Activated CD4-positive, alpha-beta T cell treated with anti-CD3 and anti-CD28 coated beads for 36 hours (primary cell): ENCODE measurements at regions of chr18 and their contacts with region 1.

Region 1: GRCh38 chr18:4181882-4182568 is 273.1 kb downstream of the DLGAP1 start:
- DNase-seq: no peak
- ATAC-seq: no peak
- H3K4me3 Mint-ChIP-seq: no peak overlapping the region
- H3K27ac Mint-ChIP-seq: no peak overlapping the region
- H3K4me1 Mint-ChIP-seq: no peaks in the 10 kb centered on the region
- H3K27me3 Mint-ChIP-seq: no peaks in the 10 kb centered on the region

Region 2: GRCh38 chr18:4119813-4120212 is 62.2 kb before region 1 on chr18:
- CTCF ChIA-PET with region 1: no interaction called
- POLR2A ChIA-PET with region 1: no interaction called
- intact Hi-C with region 1: loop called in 1 of 2 experiments (anchors 5 kb)
- DNase-seq: no peak
- ATAC-seq: no peak
- H3K4me3 Mint-ChIP-seq: no peak overlapping the region
- H3K27ac Mint-ChIP-seq: no peak overlapping the region
- H3K4me1 Mint-ChIP-seq: no peaks in the 10 kb centered on the region
- H3K27me3 Mint-ChIP-seq: peaks cover 10% of the 10 kb centered on the region

Region 3: DNA sequence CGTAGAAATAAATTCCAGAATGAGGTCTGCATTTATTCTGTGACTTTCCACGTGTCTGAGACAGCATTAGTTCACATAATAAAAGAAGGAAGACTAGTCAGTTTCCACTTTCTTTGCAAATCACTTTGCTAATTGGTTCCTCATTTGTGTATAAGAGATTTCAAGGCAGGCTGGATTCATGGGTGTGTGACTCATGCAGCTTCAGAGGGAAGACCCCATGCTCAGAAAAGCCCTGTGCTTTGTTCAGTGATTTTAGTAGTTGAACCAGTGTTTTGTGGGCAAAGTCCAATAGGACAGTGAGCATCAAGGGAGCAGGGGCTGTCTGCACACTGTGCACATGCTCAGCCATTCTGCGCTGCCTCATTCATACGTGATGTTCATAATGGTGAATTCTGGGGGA is 24.7 kb before region 1 on chr18:
- CTCF ChIA-PET with region 1: no interaction called
- POLR2A ChIA-PET with region 1: no interaction called
- intact Hi-C with region 1: no loop called
- DNase-seq: no peak
- ATAC-seq: no peak
- H3K4me3 Mint-ChIP-seq: no peak overlapping the region
- H3K27ac Mint-ChIP-seq: no peak overlapping the region
- H3K4me1 Mint-ChIP-seq: no peaks in the 10 kb centered on the region
- H3K27me3 Mint-ChIP-seq: no peaks in the 10 kb centered on the region

Region 4: DNA sequence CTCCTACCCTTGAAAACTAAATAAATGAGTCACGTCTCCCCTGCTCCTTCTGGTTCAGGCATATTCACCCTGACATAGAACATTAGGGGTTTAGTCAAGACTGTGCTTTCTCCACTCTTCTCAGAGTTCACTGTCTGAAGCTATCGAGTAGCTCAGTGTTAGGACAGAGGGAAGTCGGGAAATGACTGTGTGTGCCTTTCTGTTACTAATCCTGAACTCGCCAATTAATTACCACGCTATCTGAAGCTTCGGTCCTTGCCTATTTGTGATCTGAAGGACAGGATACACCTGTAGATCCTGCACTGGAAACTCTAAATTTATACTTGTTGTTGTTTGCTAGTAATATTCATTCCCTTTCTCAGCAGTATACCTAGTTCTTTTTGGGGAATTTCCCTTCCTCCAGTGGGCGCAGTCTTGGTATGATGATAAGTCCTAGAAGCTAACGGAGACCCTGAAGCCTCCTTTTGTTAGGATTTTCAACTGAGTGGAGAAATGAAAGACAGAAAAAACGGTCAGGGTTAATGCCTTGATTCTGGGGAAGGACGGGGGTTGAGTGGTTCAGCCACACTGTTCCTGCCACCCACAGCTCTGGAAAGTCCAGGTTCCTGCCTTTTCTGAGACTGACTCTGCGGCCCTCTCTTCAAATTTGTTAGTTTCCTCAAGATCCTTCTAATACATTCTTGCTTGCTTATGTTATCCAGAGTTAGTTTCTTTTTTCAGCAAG is 55.1 kb after region 1 on chr18:
- CTCF ChIA-PET with region 1: no interaction called
- POLR2A ChIA-PET with region 1: no interaction called
- intact Hi-C with region 1: no loop called
- DNase-seq: no peak
- ATAC-seq: no peak
- H3K4me3 Mint-ChIP-seq: no peak overlapping the region
- H3K27ac Mint-ChIP-seq: no peak overlapping the region
- H3K4me1 Mint-ChIP-seq: no peaks in the 10 kb centered on the region
- H3K27me3 Mint-ChIP-seq: no peaks in the 10 kb centered on the region